Heart right ventricle (tissue), 16 donors: ENCODE measurements at regions of chr15 and their contacts with region 1.

Region 1: DNA sequence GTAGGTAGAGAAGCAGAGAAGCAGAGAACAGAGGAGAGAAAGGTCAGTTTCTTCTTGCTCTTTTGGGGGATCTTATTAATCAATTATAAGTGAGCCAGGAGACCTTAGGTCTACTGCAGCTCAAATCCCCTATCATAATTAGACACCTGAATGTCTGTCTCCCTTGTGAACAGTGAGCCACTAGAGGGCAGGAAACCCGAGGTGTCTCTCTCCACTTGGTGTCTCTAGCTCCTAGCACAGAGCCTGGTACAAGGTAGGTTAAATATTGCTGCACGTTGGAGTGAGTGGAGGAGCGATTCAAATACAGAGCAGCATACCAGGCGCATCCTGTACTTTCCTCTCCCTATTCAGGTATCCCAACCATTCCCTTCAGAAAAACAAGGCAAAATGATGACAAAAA is 2.0 kb upstream of the ST8SIA2 start:
- DNase-seq: no peak
- ATAC-seq: peak in 5 of 8 donors; percentile 45 to 60 (median 53)
- H3K4me3 ChIP-seq: no peak overlapping the region
- H3K27ac ChIP-seq: no peak overlapping the region
- H3K4me1 ChIP-seq: peaks cover 0 to 22% (median 6%) of the 10 kb centered on the region in 9 donors
- H3K27me3 ChIP-seq: peaks cover 3 to 89% (median 63%) of the 10 kb centered on the region in 7 donors
- CTCF ChIP-seq: peak in 7 of 9 donors; percentile 36 to 60 (median 46)

Region 2: DNA sequence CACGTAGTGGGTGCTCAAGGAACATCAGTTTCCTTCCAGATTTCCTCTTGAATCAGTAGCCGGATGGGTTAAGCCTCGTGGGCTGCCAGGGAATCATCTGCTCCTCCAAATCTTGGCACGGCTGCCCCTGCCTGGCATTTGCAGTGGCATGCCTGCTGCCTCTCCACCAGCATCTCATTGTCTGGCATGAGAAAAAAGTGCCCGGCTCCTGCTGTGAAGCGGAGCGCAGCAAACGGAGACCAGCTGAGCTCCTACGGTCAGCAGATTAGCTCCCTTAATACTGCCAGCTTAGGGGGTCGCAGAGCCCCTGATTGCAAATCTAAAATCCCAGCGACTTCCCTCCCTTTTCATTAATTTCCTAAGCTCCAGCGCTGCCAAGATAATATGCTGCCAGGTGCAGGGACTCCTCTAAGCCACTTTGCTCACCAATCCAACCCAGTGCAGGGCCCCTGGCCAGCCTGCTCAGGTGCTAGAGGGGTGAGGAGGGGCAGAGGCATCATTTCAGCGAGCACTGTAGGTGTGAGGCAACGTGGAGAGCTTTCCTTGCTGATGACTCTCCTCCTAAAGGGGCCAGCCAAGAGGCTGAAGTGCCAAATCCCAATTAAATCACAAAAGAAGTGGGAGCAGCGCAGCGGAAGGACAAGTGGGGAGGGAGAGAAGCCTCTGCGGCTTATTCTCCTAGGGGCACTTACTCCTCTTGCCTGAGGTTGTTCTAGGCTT is 47.6 kb before region 1 on chr15:
- intact Hi-C with region 1: no loop called
- DNase-seq: peak; percentile 65 to 68
- ATAC-seq: peak; percentile 63 to 94 (median 82)
- H3K4me3 ChIP-seq: no peak overlapping the region
- H3K27ac ChIP-seq: peak overlapping the region in 3 of 10 donors; percentile 34 to 66 (median 57)
- H3K4me1 ChIP-seq: peaks cover 0 to 23% (median 7%) of the 10 kb centered on the region in 9 donors
- H3K27me3 ChIP-seq: peaks cover 0 to 22% (median 14%) of the 10 kb centered on the region in 7 donors
- CTCF ChIP-seq: no peak

Region 3: DNA sequence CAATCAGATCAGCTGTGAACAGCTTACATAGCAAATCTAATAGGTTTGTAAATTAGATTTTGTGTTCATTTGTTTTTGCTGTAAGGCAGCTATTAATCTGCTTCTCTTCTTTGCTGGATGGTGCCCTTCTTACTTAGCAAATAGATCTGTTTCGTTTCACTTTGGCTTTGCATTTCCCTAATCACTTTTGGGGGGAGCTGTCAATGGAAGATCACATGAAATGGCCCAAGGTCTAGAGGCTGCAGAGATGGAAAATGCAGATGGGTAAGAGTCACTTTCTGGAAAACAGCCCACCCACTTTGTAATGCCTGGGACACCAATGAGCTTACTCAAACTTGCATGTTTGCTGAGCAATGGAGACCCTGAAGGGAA is 38.4 kb after region 1 on chr15:
- intact Hi-C with region 1: no loop called
- DNase-seq: no peak
- ATAC-seq: no peak
- H3K4me3 ChIP-seq: no peak overlapping the region
- H3K27ac ChIP-seq: no peak overlapping the region
- H3K4me1 ChIP-seq: peaks cover 0 to 6% (median 0%) of the 10 kb centered on the region in 9 donors
- H3K27me3 ChIP-seq: peaks cover 0 to 11% (median 0%) of the 10 kb centered on the region in 7 donors
- CTCF ChIP-seq: no peak

Region 4: GRCh38 chr15:92451225-92451825 is 59.7 kb after region 1 on chr15:
- intact Hi-C with region 1: loop called in 1 of 10 experiments (anchors 10 kb)
- DNase-seq: no peak
- ATAC-seq: no peak
- H3K4me3 ChIP-seq: no peak overlapping the region
- H3K27ac ChIP-seq: no peak overlapping the region
- H3K4me1 ChIP-seq: no peaks in the 10 kb centered on the region
- H3K27me3 ChIP-seq: peaks cover 0 to 11% (median 0%) of the 10 kb centered on the region in 7 donors
- CTCF ChIP-seq: no peak

Region 5: DNA sequence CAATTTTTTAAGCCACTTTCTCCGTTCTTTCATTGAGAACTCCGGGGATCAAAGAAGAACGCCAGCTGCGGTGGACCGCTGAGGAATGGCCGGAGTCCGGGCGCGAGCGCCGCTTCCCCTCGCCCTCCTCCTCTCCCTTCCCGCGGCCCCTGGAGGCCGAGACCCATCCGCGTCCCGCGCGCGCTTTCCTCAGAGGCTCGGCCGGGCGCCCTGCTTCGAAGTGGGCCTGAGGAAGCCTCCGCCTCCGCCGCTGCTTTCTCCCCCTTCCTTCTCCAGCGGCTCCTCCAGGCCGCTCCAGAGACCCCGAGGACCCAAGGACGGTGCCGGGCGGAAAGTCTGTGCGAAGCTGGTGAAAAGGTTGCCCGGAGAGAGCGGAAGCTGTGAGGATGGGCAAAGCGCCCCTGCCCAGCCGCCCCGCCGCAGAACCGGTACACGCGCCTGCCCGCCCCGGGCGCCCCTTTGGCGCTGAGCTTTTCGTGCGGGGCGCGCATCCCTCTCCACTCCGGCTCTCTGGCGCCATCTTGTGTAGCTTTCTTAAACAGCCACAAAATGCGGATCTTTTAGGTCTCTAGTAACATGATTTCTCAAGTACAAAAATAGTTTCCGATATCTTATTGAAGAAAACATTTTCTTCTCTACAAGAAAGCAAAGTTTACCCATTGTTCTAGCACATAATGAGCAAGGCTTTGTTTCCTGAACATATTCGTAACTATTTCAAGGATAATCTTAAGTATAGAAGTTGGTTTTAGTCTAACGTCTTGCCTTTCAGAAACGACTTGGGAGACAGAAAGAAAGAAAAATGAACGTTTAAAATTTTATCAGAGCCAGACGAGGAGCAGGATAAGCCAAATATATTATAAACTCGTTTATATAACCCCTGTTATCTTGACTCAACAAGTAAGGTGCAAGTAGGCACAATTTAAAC is 323.1 kb after region 1 on chr15:
- intact Hi-C with region 1: loop called in 1 of 10 experiments (anchors 10 kb)
- DNase-seq: peak; percentile 68 to 80
- ATAC-seq: peak; percentile 89 to 95 (median 92)
- H3K4me3 ChIP-seq: peak overlapping the region; percentile 39 to 79 (median 62)
- H3K27ac ChIP-seq: peak overlapping the region in 9 of 10 donors; percentile 19 to 76 (median 66)
- H3K4me1 ChIP-seq: peaks cover 0 to 12% (median 4%) of the 10 kb centered on the region in 9 donors
- H3K27me3 ChIP-seq: no peaks in the 10 kb centered on the region
- CTCF ChIP-seq: peak; percentile 86 to 98 (median 93)